Activated CD4-positive, alpha-beta memory T cell treated with anti-CD3 and anti-CD28 coated beads, Interleukin-2, amount 10 ng/mL, durations not matched to agents 7 days and 5 days (primary cell): ENCODE measurements at regions of chr12 and their contacts with region 1.

Region 1: DNA sequence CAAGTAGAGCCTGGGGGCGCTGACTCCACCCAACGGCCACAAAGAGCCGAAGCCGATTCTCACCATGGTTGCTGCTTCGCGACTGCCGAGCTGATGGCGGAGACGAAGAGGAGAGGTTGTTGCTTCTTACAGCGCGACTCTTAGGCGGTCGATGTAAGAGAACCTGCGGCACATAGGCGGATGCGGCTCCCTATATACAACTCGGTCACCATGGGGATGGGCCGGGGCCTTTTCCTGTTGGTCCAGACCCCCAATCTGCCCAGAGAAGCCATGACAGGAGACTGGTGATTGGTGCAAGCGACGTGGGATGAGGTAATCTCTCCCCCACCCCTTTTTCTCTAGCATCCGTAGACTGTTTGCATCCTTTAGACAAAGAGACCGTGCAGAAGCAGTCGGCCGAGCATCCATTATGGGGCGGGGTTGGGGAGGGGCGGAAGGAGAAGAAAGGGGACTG is at the start of gene TUBA1A:
- DNase-seq: peak; percentile 98
- H3K4me3 Mint-ChIP-seq: peak within 1 kb of the TSS; percentile 81
- H3K27ac Mint-ChIP-seq: peak within 1 kb of the TSS; percentile 94
- H3K4me1 Mint-ChIP-seq: peaks cover 30% of the 10 kb centered on the region
- H3K27me3 Mint-ChIP-seq: peaks cover 3% of the 10 kb centered on the region
- total RNA-seq, gene TUBA1A: 106 to 109 TPM

Region 2: GRCh38 chr12:49110464-49111155 is 78.3 kb before region 1 on chr12 and contains the start of gene LMBR1L:
- CTCF ChIA-PET with region 1: interaction called, 4 read pairs
- POLR2A ChIA-PET with region 1: interaction called, 12 read pairs
- DNase-seq: peak; percentile 97
- H3K4me3 Mint-ChIP-seq: peak within 1 kb of the TSS; percentile 88
- H3K27ac Mint-ChIP-seq: peak within 1 kb of the TSS; percentile 82
- H3K4me1 Mint-ChIP-seq: peaks cover 31% of the 10 kb centered on the region
- H3K27me3 Mint-ChIP-seq: peaks cover 2% of the 10 kb centered on the region
- total RNA-seq, gene LMBR1L: 82.8 to 85.3 TPM

Region 3: DNA sequence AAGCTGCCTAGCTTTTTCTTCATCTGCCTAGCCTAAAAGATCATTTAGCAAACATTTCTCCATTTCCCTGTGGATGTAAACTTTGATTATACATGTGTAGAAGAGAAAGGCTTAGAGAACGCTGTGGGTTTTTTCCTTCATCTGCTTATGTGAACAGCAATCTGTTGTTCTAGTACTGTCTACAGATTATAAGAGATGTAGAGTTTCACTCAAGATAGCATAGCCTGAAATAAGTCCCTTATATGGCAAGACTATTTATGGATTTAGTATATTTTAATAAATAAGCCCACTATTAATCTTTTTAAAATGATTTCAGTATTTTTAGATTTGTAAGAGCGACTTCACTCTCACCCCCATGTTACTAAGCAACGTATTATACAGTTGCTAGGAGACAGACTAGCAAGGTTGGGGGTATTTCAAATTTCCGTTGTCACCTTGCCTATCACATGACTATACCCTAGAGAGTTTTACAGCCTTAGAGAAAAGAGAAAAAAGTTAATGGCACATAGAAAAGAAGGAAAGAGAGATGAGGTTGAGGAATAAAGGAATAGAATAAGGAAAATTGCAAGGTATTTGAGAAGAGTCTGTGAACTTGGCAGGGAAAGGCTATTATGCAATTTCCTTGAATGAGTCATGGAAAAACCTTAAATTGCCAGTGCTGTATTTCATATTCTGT is 12.1 kb after region 1 on chr12:
- CTCF ChIA-PET with region 1: no interaction called
- POLR2A ChIA-PET with region 1: interaction called, 37 read pairs
- DNase-seq: no peak
- H3K4me3 Mint-ChIP-seq: no peak overlapping the region
- H3K27ac Mint-ChIP-seq: no peak overlapping the region
- H3K4me1 Mint-ChIP-seq: peaks cover 12% of the 10 kb centered on the region
- H3K27me3 Mint-ChIP-seq: peaks cover 13% of the 10 kb centered on the region

Region 4: GRCh38 chr12:49264738-49265515 is 76.0 kb after region 1 on chr12 and contains the start of gene TUBA1C:
- CTCF ChIA-PET with region 1: interaction called, 4 read pairs
- POLR2A ChIA-PET with region 1: interaction called, 44 read pairs
- DNase-seq: peak; percentile 93
- H3K4me3 Mint-ChIP-seq: peak within 1 kb of the TSS; percentile 95
- H3K27ac Mint-ChIP-seq: peak within 1 kb of the TSS; percentile 95
- H3K4me1 Mint-ChIP-seq: peaks cover 56% of the 10 kb centered on the region
- H3K27me3 Mint-ChIP-seq: no peaks in the 10 kb centered on the region
- total RNA-seq, gene TUBA1C: 250 to 262 TPM

Region 5: DNA sequence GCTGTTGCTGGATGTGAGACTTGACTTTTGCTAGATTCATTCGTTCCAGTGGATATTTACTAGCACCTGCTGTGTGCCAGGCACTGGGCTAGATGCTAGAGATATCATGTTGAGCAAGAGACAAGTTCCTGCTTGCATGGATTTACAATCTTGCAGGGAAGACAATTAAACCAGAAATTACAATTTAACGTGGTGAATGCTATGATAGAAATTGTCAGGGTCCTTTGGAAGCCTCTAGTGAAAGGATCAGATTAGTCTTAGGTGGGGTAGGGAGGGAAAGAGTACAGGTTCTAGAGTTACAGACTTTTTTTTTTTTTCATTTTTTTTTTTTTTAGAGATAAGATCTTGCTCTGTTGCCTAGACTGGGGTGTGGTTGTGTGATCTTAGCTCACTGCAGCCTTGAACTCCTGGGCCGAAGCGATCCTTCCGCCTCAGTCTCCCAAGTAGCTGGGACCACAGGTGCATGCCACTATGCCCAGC is 215.1 kb after region 1 on chr12:
- CTCF ChIA-PET with region 1: no interaction called
- POLR2A ChIA-PET with region 1: no interaction called
- DNase-seq: no peak
- H3K4me3 Mint-ChIP-seq: no peak overlapping the region
- H3K27ac Mint-ChIP-seq: no peak overlapping the region
- H3K4me1 Mint-ChIP-seq: peaks cover 17% of the 10 kb centered on the region
- H3K27me3 Mint-ChIP-seq: no peaks in the 10 kb centered on the region